Mammary epithelial cell (primary cell): ENCODE measurements at regions of chr1 and their contacts with region 1.

Region 1: GRCh38 chr1:151281969-151282882 is at the start of gene ZNF687:
- DNase-seq: peak; percentile 100
- H3K4me3 ChIP-seq: peak within 1 kb of the TSS; percentile 75 to 86 (median 85)
- H3K27ac ChIP-seq: peak within 1 kb of the TSS; percentile 97
- H3K4me1 ChIP-seq: peaks cover 16% of the 10 kb centered on the region
- H3K27me3 ChIP-seq: no peaks in the 10 kb centered on the region
- CTCF ChIP-seq: no peak
- total RNA-seq, gene ZNF687: 17.7 to 23.3 TPM

Region 2: DNA sequence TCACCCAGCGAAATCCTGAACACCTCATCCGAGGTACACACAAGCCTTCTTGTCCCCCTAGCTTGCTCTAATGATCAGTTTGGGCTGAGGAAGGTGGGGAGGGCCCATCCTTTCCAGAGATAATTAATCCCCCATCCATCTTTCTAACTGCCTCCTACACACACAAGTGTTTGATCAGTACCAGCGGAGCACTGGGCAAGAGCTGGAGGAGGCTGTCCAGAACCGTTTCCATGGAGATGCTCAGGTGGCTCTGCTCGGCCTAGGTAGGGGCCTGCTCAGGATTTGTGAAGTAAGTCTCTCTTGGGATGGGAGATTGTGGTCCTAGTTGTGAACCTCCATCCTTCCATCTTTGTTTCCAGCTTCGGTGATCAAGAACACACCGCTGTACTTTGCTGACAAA is 294.3 kb before region 1 on chr1:
- CTCF ChIA-PET with region 1: no interaction called
- dilution Hi-C with region 1: no loop called
- in situ Hi-C with region 1: no loop called
- intact Hi-C with region 1: no loop called
- DNase-seq: no peak
- H3K4me3 ChIP-seq: no peak overlapping the region
- H3K27ac ChIP-seq: no peak overlapping the region
- H3K4me1 ChIP-seq: no peaks in the 10 kb centered on the region
- H3K27me3 ChIP-seq: no peaks in the 10 kb centered on the region
- CTCF ChIP-seq: no peak

Region 3: DNA sequence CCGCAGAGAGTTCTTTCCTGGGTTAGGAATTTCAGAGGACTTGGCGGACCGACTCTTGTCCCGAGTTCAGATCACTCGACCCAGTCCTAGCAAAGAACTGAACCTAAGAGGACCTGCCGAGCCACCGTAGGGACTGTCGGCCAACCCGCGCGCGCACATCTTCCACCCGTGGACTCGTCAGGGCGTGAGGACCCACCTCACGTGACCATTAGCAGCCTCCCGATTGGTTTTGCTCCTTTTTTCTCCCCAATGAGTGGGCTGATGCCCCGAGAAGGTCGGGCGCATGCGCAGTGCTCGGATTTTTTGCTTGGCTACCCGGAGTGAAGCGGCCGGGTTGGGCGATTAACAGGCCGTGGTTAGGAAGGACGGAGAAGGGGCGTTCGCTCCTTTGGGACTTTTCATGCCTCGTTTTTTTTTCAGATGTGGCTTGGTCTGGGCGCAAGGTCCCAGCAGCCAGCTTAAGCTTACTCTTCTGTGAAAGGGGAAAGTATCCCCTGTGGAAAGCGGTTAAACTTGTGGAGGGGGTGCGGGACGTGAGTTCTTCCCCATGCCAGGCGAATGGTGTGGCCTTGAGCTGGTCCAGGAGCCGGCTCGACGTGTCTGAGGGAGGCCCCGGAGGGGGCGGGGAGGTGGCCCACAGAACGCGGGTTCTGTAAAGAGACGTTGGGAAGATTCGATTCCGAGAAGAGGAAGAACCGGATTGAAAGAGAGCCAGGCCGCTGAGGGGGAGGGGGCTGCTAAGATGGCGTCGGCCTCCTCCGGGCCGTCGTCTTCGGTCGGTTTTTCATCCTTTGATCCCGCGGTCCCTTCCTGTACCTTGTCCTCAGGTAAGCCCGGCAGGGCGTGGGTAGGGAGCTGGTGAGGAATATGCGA is 83.7 kb before region 1 on chr1 and contains the start of gene PIP5K1A:
- CTCF ChIA-PET with region 1: no interaction called
- dilution Hi-C with region 1: no loop called
- in situ Hi-C with region 1: no loop called
- intact Hi-C with region 1: loop called (anchors 1 kb)
- DNase-seq: peak; percentile 95
- H3K4me3 ChIP-seq: peak within 1 kb of the TSS; percentile 64 to 83 (median 71)
- H3K27ac ChIP-seq: peak within 1 kb of the TSS; percentile 90
- H3K4me1 ChIP-seq: peaks cover 36% of the 10 kb centered on the region
- H3K27me3 ChIP-seq: no peaks in the 10 kb centered on the region
- CTCF ChIP-seq: no peak
- total RNA-seq, gene PIP5K1A: 94.2 to 103 TPM

Region 4: DNA sequence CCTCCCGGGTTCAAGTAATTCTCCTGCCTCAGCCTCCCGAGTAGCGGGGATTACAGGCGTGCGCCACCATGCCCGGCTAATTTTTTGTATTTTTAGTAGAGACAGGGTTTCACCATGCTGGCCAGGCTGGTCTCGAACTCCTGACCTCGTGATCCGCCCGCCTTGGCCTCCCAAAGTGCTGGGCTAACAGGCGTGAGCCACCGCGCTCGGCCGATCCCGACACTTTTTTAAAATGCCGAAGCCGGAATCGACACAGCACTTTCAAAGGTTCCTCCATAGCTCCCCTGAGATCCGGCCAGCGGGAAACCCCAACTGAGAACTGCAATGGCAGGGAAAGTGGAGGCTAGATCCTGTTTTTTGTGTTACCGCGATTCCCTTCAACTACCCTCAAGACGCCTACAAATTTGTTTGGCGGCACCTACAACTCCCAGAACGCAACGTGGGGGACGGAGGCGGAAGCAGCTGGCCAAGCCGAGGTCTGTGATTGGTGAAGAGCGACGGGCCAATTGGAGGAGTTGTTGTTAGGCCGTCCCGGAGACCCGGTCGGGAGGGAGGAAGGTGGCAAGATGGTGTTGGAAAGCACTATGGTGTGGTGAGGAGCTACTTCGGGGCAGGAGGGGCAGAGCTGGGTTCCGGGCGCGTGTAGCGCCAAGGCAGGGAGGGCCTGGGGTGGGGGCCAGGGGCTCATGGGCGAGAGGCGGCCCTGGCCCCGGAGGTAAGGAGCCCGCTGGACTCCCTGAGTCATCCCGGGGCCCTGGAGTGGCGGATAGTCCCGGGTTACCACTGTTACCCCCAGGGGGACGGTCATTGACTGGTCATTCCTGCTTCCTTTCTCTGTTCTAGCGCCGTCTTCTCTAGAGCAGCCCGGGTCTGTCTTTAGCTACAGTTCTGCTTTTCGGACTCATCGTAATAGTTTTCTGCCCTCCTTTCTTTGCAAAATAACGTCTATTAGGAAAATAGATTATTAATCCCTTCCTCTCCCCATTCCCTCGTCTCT is 27.7 kb before region 1 on chr1 and contains the start of gene PSMD4:
- CTCF ChIA-PET with region 1: no interaction called
- dilution Hi-C with region 1: no loop called
- in situ Hi-C with region 1: no loop called
- intact Hi-C with region 1: loop called (anchors 1 kb)
- DNase-seq: peak; percentile 97
- H3K4me3 ChIP-seq: peak within 1 kb of the TSS; percentile 60 to 75 (median 72)
- H3K27ac ChIP-seq: peak within 1 kb of the TSS; percentile 70
- H3K4me1 ChIP-seq: peaks cover 9% of the 10 kb centered on the region
- H3K27me3 ChIP-seq: no peaks in the 10 kb centered on the region
- CTCF ChIP-seq: no peak
- total RNA-seq, gene PSMD4: 94.7 to 167 TPM

Region 5: GRCh38 chr1:151340870-151341754 is 58.9 kb after region 1 on chr1:
- CTCF ChIA-PET with region 1: interaction called, 6 read pairs
- dilution Hi-C with region 1: no loop called
- in situ Hi-C with region 1: no loop called
- intact Hi-C with region 1: loop called (anchors 1 kb)
- DNase-seq: peak; percentile 72
- H3K4me3 ChIP-seq: no peak overlapping the region
- H3K27ac ChIP-seq: no peak overlapping the region
- H3K4me1 ChIP-seq: peaks cover 4% of the 10 kb centered on the region
- H3K27me3 ChIP-seq: no peaks in the 10 kb centered on the region
- CTCF ChIP-seq: peak; percentile 71 to 72

Region 6: GRCh38 chr1:151459331-151460046 is 177.3 kb after region 1 on chr1 and contains the start of gene POGZ:
- CTCF ChIA-PET with region 1: interaction called, 19 read pairs
- dilution Hi-C with region 1: no loop called
- in situ Hi-C with region 1: no loop called
- intact Hi-C with region 1: no loop called
- DNase-seq: peak; percentile 88
- H3K4me3 ChIP-seq: peak within 1 kb of the TSS; percentile 69 to 87 (median 79)
- H3K27ac ChIP-seq: peak within 1 kb of the TSS; percentile 64
- H3K4me1 ChIP-seq: peaks cover 6% of the 10 kb centered on the region
- H3K27me3 ChIP-seq: no peaks in the 10 kb centered on the region
- CTCF ChIP-seq: no peak
- total RNA-seq, gene POGZ: 28.0 to 48.1 TPM